ACHN (cell line): ENCODE measurements at regions of chr17 and their contacts with region 1.

Region 1: DNA sequence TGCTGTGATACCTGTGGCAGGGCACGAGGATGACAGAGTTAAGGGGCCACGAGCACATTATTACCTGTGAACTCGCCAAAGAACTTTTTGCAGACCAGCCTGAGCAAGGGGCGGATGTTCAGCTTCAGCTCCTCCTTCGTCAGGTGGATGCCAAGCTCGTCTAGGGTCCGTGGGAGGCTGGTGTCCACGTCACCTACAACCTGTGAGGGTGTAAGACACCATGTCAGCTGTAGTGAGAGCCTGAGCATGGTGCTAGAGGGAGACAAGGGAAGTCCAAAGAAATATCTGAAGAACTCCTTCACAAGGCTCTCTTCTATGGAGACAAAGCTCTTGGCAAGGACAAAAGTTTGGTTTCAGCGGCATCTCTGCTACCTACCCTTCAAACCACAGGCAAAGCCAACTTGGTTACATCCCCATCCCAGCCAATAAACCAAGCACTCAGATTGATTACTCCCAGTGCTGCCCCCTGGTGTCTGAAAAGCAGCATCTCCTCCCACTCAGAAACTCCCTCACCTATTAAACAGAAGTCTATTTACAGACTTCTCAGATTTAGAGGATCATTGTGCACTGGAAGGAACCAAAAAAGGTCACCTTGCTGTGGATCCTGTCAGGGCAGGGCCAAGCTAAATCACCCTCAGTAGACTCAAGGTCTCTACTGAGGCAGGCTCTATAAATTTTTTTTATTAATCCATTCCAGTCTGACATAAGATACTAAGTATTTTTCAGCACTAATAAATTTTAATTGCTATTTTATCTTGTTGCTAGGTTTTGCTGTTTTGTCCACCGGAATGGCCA is 17.4 kb downstream of the HIGD1B start:
- DNase-seq: peak; percentile 81

Region 2: GRCh38 chr17:44774271-44775135 is 90.6 kb before region 1 on chr17:
- in situ Hi-C with region 1: loop called (anchors 25 kb)
- DNase-seq: peak; percentile 90